Prostate gland (tissue), 2 donors: ENCODE measurements at regions of chr9 and their contacts with region 1.

Region 1: DNA sequence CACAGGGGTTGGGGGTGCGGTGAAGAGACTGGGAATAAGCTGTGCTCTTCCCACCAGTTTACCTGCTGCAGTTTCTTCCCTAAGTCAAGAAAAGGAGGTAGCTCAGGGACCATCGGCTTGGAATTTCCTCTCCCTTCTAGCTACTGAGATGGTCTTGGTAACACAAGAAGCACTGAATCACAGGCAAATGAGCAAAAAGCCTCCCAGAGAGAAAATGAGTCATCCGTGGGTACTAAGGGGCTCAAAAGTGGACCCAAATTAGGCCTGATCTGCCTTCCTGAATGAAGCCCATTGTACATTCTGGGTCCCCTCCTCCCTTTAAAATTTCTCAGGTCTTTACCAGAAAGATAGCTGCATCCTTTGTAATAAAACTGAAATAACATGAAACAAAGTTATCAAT is 49.9 kb downstream of the PTPN3 start:
- DNase-seq: no peak
- H3K4me3 ChIP-seq: no peak overlapping the region
- H3K27ac ChIP-seq: no peak overlapping the region
- H3K4me1 ChIP-seq: no peaks in the 10 kb centered on the region
- H3K27me3 ChIP-seq: no peaks in the 10 kb centered on the region
- CTCF ChIP-seq: no peak
- POLR2A ChIP-seq: no peak

Region 2: GRCh38 chr9:108180541-108180940 is 1267.7 kb before region 1 on chr9:
- intact Hi-C with region 1: no loop called
- DNase-seq: peak; percentile 56
- H3K4me3 ChIP-seq: no peak overlapping the region
- H3K27ac ChIP-seq: no peak overlapping the region
- H3K4me1 ChIP-seq: no peaks in the 10 kb centered on the region
- H3K27me3 ChIP-seq: no peaks in the 10 kb centered on the region
- CTCF ChIP-seq: no peak
- POLR2A ChIP-seq: no peak

Region 3: GRCh38 chr9:109517901-109518377 is 69.7 kb after region 1 on chr9:
- intact Hi-C with region 1: loop called (anchors 5 kb)
- DNase-seq: peak; percentile 70
- H3K4me3 ChIP-seq: no peak overlapping the region
- H3K27ac ChIP-seq: peak overlapping the region in 1 of 2 donors; percentile 32
- H3K4me1 ChIP-seq: no peaks in the 10 kb centered on the region
- H3K27me3 ChIP-seq: no peaks in the 10 kb centered on the region
- CTCF ChIP-seq: no peak
- POLR2A ChIP-seq: no peak

Region 4: GRCh38 chr9:109880277-109881169 is 432.3 kb after region 1 on chr9:
- intact Hi-C with region 1: no loop called
- DNase-seq: no peak
- H3K4me3 ChIP-seq: no peak overlapping the region
- H3K27ac ChIP-seq: no peak overlapping the region
- H3K4me1 ChIP-seq: no peaks in the 10 kb centered on the region
- H3K27me3 ChIP-seq: no peaks in the 10 kb centered on the region
- CTCF ChIP-seq: peak in 1 of 4 experiments; percentile 31
- POLR2A ChIP-seq: no peak